AG04449 (cell line): ENCODE measurements at regions of chr19 and their contacts with region 1.

Region 1: DNA sequence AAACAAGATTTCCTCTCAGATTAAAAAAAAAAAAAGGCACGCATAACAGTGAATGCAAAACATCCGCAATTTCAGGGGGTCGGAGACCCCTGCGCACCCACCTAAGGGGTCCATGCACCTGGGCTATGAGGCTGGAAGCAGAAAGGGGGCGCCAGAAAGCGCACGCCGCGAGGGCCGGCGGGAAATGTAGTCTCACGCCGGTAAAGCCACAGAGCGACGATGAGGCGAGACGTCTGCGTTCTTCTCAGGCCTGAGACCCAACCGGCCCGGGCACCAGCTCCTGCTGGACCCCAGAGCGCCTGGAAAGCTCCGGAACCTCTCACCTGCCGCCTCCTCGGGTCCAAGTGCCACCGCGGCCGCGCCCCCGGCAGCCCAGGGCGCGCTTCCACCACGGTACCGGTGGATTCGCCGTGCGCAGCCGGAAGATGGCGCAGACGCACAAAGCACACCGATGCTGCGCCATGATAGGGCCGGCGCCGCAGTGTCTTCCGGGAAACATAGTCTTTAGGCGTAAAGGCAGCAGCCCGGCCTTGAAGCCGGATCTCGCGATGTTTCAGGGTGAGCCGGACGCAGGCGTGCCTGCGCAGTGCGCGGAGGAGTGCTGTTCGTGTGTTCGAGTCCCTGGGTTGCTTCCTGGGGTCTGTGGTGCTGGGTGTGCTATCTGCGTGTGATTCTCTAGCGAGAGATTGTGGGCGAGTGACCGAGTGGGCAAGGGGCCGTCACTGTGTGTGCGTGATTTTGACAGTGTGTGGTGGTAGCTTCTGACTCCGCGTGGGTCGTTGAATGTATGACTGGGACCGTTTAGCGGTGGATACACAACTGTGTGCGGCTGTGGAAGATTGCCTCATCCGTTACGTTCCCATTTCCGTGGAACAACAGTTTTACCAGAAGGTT is at the start of gene ZNF582:
- DNase-seq: peak; percentile 71
- H3K4me3 ChIP-seq: peak within 1 kb of the TSS; percentile 78
- CTCF ChIP-seq: peak; percentile 88

Region 2: DNA sequence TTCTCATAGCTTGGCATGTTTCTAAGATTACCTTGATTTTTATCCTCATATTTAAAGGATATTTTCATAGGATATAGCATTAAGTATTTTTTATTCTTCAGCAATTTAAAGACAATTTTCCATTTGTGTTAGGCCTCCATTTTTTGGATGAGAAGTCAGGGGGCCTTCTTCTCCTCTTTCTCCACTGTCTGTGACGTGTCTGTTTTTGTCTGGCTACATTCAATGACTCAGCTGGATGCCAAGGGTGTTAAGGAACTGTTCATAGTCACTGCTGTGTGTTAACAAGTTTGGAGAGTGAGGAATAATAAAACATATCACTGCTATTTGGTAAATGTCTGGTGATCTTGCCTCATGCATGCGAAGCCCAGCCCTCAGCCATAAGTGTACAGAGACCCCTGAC is 36.4 kb before region 1 on chr19:
- CTCF ChIA-PET with region 1: no interaction called
- POLR2A ChIA-PET with region 1: no interaction called
- DNase-seq: no peak
- H3K4me3 ChIP-seq: no peak overlapping the region
- CTCF ChIP-seq: no peak

Region 3: DNA sequence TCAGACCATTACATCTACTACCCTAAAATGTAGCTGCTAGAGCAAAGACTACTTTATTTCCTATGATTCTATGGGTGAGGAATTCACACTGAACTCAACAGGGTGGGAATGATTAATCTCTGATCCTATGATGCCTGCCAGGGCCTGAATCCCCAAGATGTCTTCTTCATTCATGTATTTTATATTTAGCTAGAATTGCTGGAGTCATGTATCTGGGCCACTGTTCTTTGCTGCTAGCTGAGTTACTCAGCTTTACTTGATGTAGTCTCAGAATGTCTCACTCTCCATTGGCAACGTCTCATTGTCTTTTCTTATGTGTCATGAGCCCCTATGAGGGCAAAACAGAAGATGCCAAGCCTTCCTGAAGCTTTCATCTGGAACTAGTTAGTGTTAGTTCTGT is 21.1 kb before region 1 on chr19:
- CTCF ChIA-PET with region 1: interaction called, 13 read pairs
- POLR2A ChIA-PET with region 1: no interaction called
- DNase-seq: no peak
- H3K4me3 ChIP-seq: no peak overlapping the region
- CTCF ChIP-seq: no peak

Region 4: DNA sequence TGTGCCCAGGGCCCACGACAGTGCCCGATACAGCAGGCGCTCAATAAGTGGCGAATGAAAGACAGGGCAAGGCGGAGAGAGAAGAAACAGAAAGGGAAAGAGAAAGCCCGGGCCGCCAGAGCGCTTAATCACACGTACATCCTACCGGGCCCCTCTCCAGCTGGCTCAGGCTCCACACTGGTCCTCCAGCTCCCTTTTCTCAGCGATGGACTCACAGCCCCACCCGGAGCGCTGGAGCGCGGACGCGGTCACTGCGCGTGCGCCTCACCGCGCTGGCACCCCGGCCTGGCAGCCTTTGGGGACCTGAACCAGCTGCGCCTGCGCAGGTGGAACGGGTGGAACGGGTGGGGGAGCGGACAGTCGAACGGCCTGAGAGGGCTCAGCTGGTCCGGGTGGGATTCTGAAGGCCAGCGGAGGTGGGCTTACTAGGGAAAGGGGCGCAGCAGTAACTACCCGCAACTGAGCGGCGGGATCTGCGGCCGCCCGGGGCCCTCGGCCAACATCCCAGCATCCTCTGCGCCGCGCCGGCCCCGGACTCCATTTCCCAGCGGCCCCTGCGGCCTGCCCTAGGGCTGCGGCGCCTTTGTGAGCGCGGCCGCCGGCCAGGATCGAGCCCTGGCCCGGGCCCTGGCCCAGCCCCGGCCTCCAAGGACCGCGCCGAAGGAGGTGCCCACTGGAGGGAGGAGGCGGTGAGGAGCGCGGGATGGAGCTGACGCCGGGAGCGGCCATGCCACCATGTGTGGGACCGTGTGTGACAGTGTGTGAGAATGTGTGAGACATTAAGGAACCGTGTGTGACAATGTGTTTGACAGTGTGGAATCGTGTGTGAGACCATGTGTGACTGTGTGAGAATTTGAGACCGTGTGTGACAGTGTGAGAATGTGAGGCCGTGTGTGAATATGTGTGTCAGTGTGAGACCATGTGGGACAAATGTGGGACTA is 10.7 kb after region 1 on chr19 and contains the start of gene ZNF583:
- CTCF ChIA-PET with region 1: interaction called, 25 read pairs
- POLR2A ChIA-PET with region 1: interaction called, 4 read pairs
- DNase-seq: peak; percentile 70
- H3K4me3 ChIP-seq: peak within 1 kb of the TSS; percentile 98
- CTCF ChIP-seq: no peak